Psoas muscle (tissue), 8 donors: ENCODE measurements at regions of chr11 and their contacts with region 1.

Region 1: DNA sequence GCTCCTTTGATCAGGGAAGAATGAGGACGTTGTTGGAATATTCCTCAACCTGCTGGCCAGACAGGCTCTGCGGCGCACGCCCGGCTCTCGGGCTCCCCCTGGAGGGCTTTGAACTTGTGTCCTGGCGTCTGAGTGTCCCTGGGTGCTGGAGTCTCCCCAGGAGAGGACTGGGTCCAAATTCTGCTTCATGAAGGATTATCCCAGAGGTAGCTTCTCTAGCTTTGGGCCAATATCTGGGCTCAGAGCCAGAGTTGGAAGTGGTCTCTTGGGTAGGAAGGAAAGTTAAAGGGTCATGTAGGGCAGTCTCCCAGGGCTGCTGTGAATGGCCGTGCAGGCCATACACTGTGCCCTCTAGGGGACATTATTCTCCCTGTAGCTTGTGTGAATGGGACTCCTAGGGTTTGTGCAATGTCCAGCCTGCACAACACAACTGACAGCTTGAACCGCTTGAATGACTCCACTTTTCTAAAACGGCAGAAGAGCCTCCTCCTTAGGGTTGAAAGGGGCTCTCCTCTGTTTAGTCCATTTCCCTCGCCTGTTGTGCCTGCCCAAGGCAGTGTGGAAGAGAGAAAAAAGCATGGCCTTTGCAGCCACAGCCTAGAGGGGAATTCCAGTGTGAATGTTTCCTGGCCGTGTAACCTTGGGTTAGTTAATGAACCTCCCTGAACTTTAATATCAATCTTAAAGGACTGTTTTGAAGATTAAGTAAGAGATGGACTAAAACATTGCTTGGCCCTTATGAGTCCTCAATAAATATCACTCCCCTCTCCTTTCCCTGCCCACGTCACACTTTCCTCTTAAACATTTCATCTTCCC is 111.2 kb upstream of the THY1 start:
- DNase-seq: peak; percentile 79 to 81
- ATAC-seq: peak; percentile 79 to 91 (median 84)
- H3K4me3 ChIP-seq: no peak overlapping the region
- H3K27ac ChIP-seq: no peak overlapping the region
- H3K4me1 ChIP-seq: no peaks in the 10 kb centered on the region
- H3K27me3 ChIP-seq: peaks cover 0 to 6% (median 2%) of the 10 kb centered on the region in 3 donors
- CTCF ChIP-seq: peak; percentile 78

Region 2: GRCh38 chr11:119481021-119481666 is 53.0 kb before region 1 on chr11:
- intact Hi-C with region 1: loop called in 1 of 2 experiments (anchors 2 kb)
- DNase-seq: peak; percentile 86 to 88
- ATAC-seq: peak; percentile 78 to 92 (median 88)
- H3K4me3 ChIP-seq: no peak overlapping the region
- H3K27ac ChIP-seq: no peak overlapping the region
- H3K4me1 ChIP-seq: no peaks in the 10 kb centered on the region
- H3K27me3 ChIP-seq: peaks cover 0 to 16% (median 2%) of the 10 kb centered on the region in 3 donors
- CTCF ChIP-seq: peak; percentile 96

Region 3: DNA sequence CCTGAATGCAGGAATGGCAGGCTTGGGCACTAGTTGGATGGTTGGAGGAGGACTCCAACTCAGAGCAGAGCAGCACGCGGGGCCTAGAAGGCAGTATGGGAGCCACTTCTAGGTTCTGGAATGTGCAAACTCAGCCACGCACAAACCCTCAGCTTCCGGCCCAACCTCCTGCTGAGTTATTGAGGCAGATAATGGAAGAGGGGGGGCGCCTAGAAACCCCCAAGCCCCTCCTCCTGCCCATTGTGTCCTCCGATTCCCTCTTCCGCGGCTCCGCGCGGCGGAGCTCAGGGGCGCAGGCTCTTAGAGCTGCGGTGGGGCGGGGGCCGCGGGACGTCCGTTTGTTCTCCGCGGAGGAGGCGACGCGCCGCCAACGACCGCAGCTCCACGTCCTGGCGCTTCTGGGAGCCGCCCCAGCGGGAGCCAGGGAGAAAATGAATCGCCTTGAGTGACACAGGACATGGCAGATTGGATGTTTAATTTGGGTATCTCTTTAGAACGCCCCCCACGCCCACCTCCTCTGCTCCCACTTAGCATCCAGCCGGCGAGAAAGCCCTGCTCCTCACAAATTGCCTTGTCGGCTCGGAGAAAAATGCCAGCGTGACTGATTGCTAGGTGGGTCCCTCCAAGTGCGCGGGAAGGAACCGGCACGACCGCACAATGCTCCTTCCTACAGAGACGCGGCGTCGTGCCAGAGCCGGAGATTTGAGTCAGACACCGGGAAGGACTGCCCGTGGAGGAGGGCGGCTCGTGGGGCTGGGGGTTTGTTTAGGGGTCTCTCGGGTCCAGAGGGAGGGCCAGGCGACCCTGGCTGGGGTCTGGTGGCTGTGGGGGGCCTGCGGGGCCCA is 50.3 kb after region 1 on chr11:
- intact Hi-C with region 1: no loop called
- DNase-seq: peak; percentile 35 to 61
- ATAC-seq: peak in 2 of 4 donors; percentile 19 to 44
- H3K4me3 ChIP-seq: peak overlapping the region; percentile 55
- H3K27ac ChIP-seq: no peak overlapping the region
- H3K4me1 ChIP-seq: peaks cover 6% of the 10 kb centered on the region
- H3K27me3 ChIP-seq: peaks cover 0 to 63% (median 6%) of the 10 kb centered on the region in 3 donors
- CTCF ChIP-seq: no peak